ENCODE measurements at regions of chr18 and their contacts with region 1.

Region 1: GRCh38 chr18:36757081-36757480 is 71.7 kb downstream of the TPGS2 start:
- DNase-seq: peak; percentile 55 to 59 (median 58)
- ATAC-seq: peak; percentile 76
- H3K4me3 ChIP-seq: no peak overlapping the region
- H3K27ac ChIP-seq: no peak overlapping the region
- H3K4me1 ChIP-seq: peaks cover 4 to 6% of the 10 kb centered on the region in 2 experiments; a peak in 4 of 5 replicates
- H3K27me3 ChIP-seq: peaks cover 29 to 33% of the 10 kb centered on the region in 2 experiments
- CTCF ChIP-seq: peak; percentile 60 to 88 (median 70)
- EP300 ChIP-seq: no peak
- POLR2A ChIP-seq: no peak
- RAD21 ChIP-seq: peak; percentile 76 to 89

Region 2: DNA sequence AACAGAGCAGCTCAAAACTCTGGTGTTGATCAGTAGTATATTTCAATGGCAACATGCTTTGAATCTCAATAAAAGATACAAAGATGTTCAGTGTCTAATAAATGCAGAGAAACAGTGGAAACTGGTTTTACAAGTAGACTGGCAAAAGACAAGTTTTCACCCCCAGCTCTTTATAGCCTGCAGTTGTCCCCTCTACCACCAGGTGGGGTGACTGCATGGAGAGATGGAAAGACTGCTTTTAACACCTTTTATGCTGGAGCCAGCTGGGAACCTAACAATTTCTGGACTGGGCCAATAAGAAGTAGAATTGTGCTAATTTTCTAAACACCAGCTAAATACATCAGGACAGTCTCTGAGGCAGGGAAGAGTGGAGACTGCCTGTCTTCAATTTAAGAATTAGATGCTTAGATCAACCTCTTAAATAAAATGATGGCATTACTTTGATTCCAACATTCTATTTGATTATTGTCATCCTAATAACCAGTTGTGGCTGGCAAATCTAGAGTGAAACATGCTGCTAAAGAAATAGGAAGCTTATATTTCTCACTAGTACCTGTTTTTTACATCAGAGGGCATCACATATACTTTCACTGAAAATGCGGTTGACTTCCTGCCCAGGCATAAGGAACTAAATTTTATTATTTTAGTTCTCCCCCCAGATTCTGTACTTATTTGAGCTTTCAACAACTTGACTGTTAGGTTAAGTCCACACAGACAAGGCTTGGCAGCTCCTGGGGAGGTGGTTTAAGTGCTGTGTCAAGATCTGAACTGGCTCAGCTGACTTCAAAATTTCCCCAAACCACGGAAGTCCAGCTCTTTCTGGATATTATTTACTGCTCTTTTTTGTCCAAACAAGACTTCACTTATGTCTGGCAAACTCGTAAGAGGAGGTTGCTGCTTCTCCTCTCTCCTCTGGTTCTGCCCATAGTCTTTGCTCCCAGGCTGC is 68.8 kb before region 1 on chr18:
- CTCF ChIA-PET with region 1: interaction called, 11 read pairs
- POLR2A ChIA-PET with region 1: interaction called, 4 read pairs
- in situ Hi-C with region 1: no loop called
- intact Hi-C with region 1: loop called (anchors 1 kb)
- DNase-seq: peak; percentile 74 to 79 (median 78)
- ATAC-seq: peak; percentile 93
- H3K4me3 ChIP-seq: no peak overlapping the region
- H3K27ac ChIP-seq: no peak overlapping the region
- H3K4me1 ChIP-seq: no peaks in the 10 kb centered on the region
- H3K27me3 ChIP-seq: peaks cover 0 to 11% of the 10 kb centered on the region in 2 experiments; a peak in 3 of 5 replicates
- CTCF ChIP-seq: peak; percentile 82 to 91 (median 83)
- EP300 ChIP-seq: no peak
- POLR2A ChIP-seq: no peak
- RAD21 ChIP-seq: peak; percentile 57 to 83

Measured in K562 (cell line).